Psoas muscle (tissue), 8 donors: ENCODE measurements at regions of chr4 and their contacts with region 1.

Region 1: GRCh38 chr4:77001907-77002306 is 52.4 kb downstream of the SEPTIN11 start:
- DNase-seq: no peak
- ATAC-seq: peak in 3 of 4 donors; percentile 38 to 63 (median 50)
- H3K4me3 ChIP-seq: no peak overlapping the region
- H3K27ac ChIP-seq: peak overlapping the region; percentile 68
- H3K4me1 ChIP-seq: peaks cover 23% of the 10 kb centered on the region
- H3K27me3 ChIP-seq: no peaks in the 10 kb centered on the region
- CTCF ChIP-seq: no peak

Region 2: DNA sequence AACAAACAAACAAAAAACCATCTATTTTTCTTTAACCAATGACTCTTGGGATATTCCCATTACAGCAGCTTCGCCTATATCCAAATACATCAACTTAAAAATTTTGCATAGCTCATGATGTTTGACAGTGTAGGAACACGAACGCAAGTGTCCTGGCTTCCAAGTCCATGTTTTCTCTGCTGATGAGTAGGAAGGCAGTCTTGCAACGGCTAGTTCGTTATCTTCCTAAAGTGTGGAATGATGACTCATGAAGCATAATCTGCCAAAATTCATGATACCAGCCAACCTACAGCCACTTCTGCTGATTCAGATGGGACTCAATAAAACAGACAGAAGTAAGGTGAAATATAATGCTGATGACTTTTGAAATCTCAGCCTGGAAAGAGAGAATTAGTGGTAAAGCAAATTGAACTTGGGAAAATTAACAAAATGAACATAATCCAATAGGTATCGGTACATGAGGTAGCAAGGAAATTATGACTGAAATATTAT is 58.7 kb before region 1 on chr4:
- intact Hi-C with region 1: loop called in 1 of 2 experiments (anchors 5 kb)
- DNase-seq: no peak
- ATAC-seq: peak in 2 of 4 donors; percentile 41 to 56
- H3K4me3 ChIP-seq: no peak overlapping the region
- H3K27ac ChIP-seq: no peak overlapping the region
- H3K4me1 ChIP-seq: peaks cover 21% of the 10 kb centered on the region
- H3K27me3 ChIP-seq: no peaks in the 10 kb centered on the region
- CTCF ChIP-seq: no peak